ENCODE measurements at regions of chr1 and their contacts with region 1.

Region 1: GRCh38 chr1:78607334-78607927 is 12.8 kb upstream of the IFI44L start:
- DNase-seq: no peak
- ATAC-seq: peak; percentile 61
- H3K4me3 ChIP-seq: no peak overlapping the region
- H3K27ac ChIP-seq: no peak overlapping the region
- H3K4me1 ChIP-seq: no peaks in the 10 kb centered on the region
- H3K27me3 ChIP-seq: no peaks in the 10 kb centered on the region
- CTCF ChIP-seq: peak; percentile 30 to 51 (median 31); a peak in 4 of 6 replicates
- EP300 ChIP-seq: no peak
- POLR2A ChIP-seq: no peak
- RAD21 ChIP-seq: peak; percentile 62

Region 2: GRCh38 chr1:78126506-78126905 is 480.9 kb before region 1 on chr1:
- CTCF ChIA-PET with region 1: interaction called, 76 read pairs
- POLR2A ChIA-PET with region 1: no interaction called
- RAD21 ChIA-PET with region 1: interaction called, 34 read pairs
- SMC1A ChIA-PET with region 1: interaction called, 41 read pairs
- in situ Hi-C with region 1: loop called (anchors 5 kb)
- intact Hi-C with region 1: loop called (anchors 1 kb)
- DNase-seq: no peak
- ATAC-seq: no peak
- H3K4me3 ChIP-seq: no peak overlapping the region
- H3K27ac ChIP-seq: no peak overlapping the region
- H3K4me1 ChIP-seq: no peaks in the 10 kb centered on the region
- H3K27me3 ChIP-seq: no peaks in the 10 kb centered on the region
- CTCF ChIP-seq: no peak
- EP300 ChIP-seq: no peak
- POLR2A ChIP-seq: no peak
- RAD21 ChIP-seq: no peak

Region 3: GRCh38 chr1:78132174-78132947 is 475.1 kb before region 1 on chr1:
- CTCF ChIA-PET with region 1: interaction called, 76 read pairs
- POLR2A ChIA-PET with region 1: no interaction called
- RAD21 ChIA-PET with region 1: interaction called, 34 read pairs
- SMC1A ChIA-PET with region 1: interaction called, 41 read pairs
- in situ Hi-C with region 1: loop called (anchors 5 kb)
- intact Hi-C with region 1: loop called (anchors 1 kb)
- DNase-seq: no peak
- ATAC-seq: peak; percentile 59
- H3K4me3 ChIP-seq: no peak overlapping the region
- H3K27ac ChIP-seq: no peak overlapping the region
- H3K4me1 ChIP-seq: no peaks in the 10 kb centered on the region; the same call in 1 of the 2 replicates
- H3K27me3 ChIP-seq: no peaks in the 10 kb centered on the region
- CTCF ChIP-seq: no peak
- EP300 ChIP-seq: no peak
- POLR2A ChIP-seq: no peak
- RAD21 ChIP-seq: no peak

Region 4: GRCh38 chr1:78323311-78323710 is 284.1 kb before region 1 on chr1:
- CTCF ChIA-PET with region 1: no interaction called
- POLR2A ChIA-PET with region 1: no interaction called
- RAD21 ChIA-PET with region 1: no interaction called
- SMC1A ChIA-PET with region 1: no interaction called
- in situ Hi-C with region 1: no loop called
- intact Hi-C with region 1: loop called (anchors 5 kb)
- DNase-seq: no peak
- ATAC-seq: no peak
- H3K4me3 ChIP-seq: no peak overlapping the region
- H3K27ac ChIP-seq: no peak overlapping the region
- H3K4me1 ChIP-seq: no peaks in the 10 kb centered on the region
- H3K27me3 ChIP-seq: no peaks in the 10 kb centered on the region
- CTCF ChIP-seq: no peak
- EP300 ChIP-seq: no peak
- POLR2A ChIP-seq: no peak
- RAD21 ChIP-seq: no peak

Region 5: GRCh38 chr1:78370356-78370755 is 237.1 kb before region 1 on chr1:
- CTCF ChIA-PET with region 1: no interaction called
- POLR2A ChIA-PET with region 1: no interaction called
- RAD21 ChIA-PET with region 1: no interaction called
- SMC1A ChIA-PET with region 1: no interaction called
- in situ Hi-C with region 1: no loop called
- intact Hi-C with region 1: loop called (anchors 10 kb)
- DNase-seq: no peak
- ATAC-seq: peak; percentile 55
- H3K4me3 ChIP-seq: no peak overlapping the region
- H3K27ac ChIP-seq: no peak overlapping the region
- H3K4me1 ChIP-seq: no peaks in the 10 kb centered on the region
- H3K27me3 ChIP-seq: no peaks in the 10 kb centered on the region; a peak in 1 of 4 replicates
- CTCF ChIP-seq: no peak
- EP300 ChIP-seq: no peak
- POLR2A ChIP-seq: no peak
- RAD21 ChIP-seq: no peak

Region 6: GRCh38 chr1:78627321-78627720 is 19.9 kb after region 1 on chr1:
- CTCF ChIA-PET with region 1: no interaction called
- POLR2A ChIA-PET with region 1: no interaction called
- RAD21 ChIA-PET with region 1: no interaction called
- SMC1A ChIA-PET with region 1: no interaction called
- in situ Hi-C with region 1: no loop called
- intact Hi-C with region 1: no loop called
- DNase-seq: no peak
- ATAC-seq: no peak
- H3K4me3 ChIP-seq: peak overlapping the region; percentile 63
- H3K27ac ChIP-seq: no peak overlapping the region
- H3K4me1 ChIP-seq: peaks cover 8% of the 10 kb centered on the region; the same call in 1 of the 2 replicates
- H3K27me3 ChIP-seq: no peaks in the 10 kb centered on the region
- CTCF ChIP-seq: no peak
- EP300 ChIP-seq: no peak
- POLR2A ChIP-seq: no peak
- RAD21 ChIP-seq: no peak

Region 7: GRCh38 chr1:78814176-78814575 is 206.7 kb after region 1 on chr1:
- CTCF ChIA-PET with region 1: no interaction called
- POLR2A ChIA-PET with region 1: no interaction called
- RAD21 ChIA-PET with region 1: no interaction called
- SMC1A ChIA-PET with region 1: no interaction called
- in situ Hi-C with region 1: no loop called
- intact Hi-C with region 1: no loop called
- DNase-seq: no peak
- ATAC-seq: no peak
- H3K4me3 ChIP-seq: no peak overlapping the region
- H3K27ac ChIP-seq: no peak overlapping the region
- H3K4me1 ChIP-seq: no peaks in the 10 kb centered on the region
- H3K27me3 ChIP-seq: no peaks in the 10 kb centered on the region
- CTCF ChIP-seq: no peak
- EP300 ChIP-seq: no peak
- POLR2A ChIP-seq: no peak
- RAD21 ChIP-seq: no peak

Measured in GM12878 (cell line).